ENCODE measurements at regions of chr2 and their contacts with region 1.

Region 1: GRCh38 chr2:231917280-231918066 is 8.7 kb downstream of the NPPC start:
- DNase-seq: peak in 1 of 5 donors; percentile 54
- H3K4me3 ChIP-seq: no peak overlapping the region
- H3K27ac ChIP-seq: no peak overlapping the region
- H3K4me1 ChIP-seq: no peaks in the 10 kb centered on the region
- H3K27me3 ChIP-seq: no peaks in the 10 kb centered on the region
- CTCF ChIP-seq: no peak

Region 2: DNA sequence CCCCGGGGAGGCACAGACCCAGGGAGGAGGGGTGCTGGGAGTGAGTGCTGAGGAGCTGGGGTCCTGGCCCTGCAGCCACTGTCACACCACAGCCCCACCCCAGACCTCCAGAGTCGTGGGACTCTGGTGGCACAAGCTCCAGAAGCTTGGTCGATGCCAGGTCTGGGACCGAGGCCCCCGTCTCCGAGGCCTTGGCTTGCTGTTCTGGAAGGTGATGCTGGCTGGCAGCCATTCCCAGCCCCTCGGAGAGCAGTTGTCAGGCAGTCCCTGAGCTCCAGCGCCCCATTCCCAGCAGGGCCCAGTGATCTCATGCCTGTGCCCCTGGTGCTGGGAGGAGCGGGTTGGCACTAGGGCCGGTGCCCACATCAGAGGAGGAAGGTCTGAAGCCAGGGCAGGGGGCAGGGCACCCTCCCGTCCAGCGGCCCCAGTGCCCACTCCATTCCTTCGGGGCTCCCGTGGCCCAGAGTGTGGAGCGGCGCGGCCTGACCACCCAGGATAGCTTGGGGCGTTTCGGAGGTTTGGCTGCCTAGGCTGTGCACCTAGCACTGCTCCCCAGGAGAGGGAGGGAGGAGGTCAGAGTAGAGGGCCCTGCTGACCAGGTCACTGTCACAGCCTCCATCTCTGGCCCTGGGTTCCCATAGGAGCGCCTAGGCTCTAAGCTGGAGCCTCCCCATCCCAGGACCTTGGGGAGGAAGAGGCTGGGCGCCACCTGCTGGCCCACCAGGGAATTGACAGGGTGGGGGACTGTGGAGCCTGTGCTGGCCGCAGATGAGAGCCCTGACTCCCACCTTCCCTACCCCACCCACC is 521.7 kb after region 1 on chr2:
- intact Hi-C with region 1: loop called (anchors 10 kb)
- DNase-seq: peak in 2 of 5 donors; percentile 65 to 75
- H3K4me3 ChIP-seq: no peak overlapping the region
- H3K27ac ChIP-seq: no peak overlapping the region
- H3K4me1 ChIP-seq: peaks cover 0 to 1% (median 0%) of the 10 kb centered on the region in 3 donors
- H3K27me3 ChIP-seq: no peaks in the 10 kb centered on the region
- CTCF ChIP-seq: peak; percentile 16